ENCODE measurements at regions of chr19 and their contacts with region 1.

Region 1: DNA sequence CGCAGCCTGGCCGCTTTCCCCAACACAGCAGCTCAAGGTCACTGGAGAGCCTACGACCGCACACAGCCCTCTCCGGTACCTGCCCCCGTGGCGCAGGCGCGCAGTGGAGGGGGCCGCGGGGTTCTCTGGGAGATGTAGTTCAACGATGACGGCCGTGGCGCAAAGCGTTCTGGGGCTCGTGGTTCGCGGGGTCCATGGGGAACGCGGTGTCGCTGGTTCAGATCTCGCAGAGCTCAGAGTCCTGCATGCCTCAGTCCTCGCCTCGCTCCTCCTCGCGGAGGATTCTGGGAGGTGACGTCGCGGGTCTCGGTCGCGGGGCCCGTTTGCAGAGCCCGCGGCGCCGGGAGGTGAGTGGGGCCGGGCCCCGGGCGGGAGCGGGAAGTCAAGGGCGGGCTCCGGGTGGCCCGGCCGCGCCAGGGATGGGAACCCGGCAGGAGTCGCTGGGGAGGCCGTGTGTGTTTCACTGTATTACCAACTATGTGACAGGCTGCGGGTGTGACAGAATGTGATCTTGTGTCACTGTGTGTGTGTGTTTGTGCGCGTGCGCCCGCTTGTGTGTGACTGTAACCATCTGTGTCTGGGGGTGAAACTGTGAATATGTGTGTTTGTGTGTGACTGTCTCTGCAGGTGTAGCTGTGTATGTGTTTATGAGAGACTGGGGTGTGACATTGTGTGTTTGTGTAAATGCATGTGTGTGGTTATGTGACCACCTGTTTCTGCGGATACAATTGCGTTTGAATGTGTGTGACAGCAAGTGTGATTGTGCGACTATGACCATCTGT is at the start of gene ZNF527:
- H3K4me3 ChIP-seq: peak within 1 kb of the TSS; percentile 48
- H3K27ac ChIP-seq: peak within 1 kb of the TSS; percentile 52
- H3K4me1 ChIP-seq: no peaks in the 10 kb centered on the region
- CTCF ChIP-seq: peak; percentile 91

Region 2: GRCh38 chr19:37136111-37136510 is 235.0 kb before region 1 on chr19:
- CTCF ChIA-PET with region 1: no interaction called
- POLR2A ChIA-PET with region 1: no interaction called
- H3K4me3 ChIP-seq: no peak overlapping the region
- H3K27ac ChIP-seq: no peak overlapping the region
- H3K4me1 ChIP-seq: no peaks in the 10 kb centered on the region
- CTCF ChIP-seq: no peak

Region 3: DNA sequence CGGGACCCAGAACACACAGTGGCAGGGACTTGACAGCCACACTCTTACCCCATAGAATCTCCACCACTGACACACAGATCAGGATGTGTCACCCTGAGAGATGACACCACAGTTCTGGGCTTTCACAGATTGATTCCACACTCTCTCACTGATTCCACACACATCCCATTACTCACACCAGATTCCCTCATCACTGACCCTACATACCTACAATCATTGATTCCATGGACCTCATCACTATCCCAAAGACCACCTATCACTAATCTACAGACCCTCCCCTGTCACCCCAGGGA is 57.8 kb before region 1 on chr19:
- CTCF ChIA-PET with region 1: no interaction called
- POLR2A ChIA-PET with region 1: interaction called, 17 read pairs
- H3K4me3 ChIP-seq: no peak overlapping the region
- H3K27ac ChIP-seq: no peak overlapping the region
- H3K4me1 ChIP-seq: no peaks in the 10 kb centered on the region
- CTCF ChIP-seq: no peak

Region 4: GRCh38 chr19:37389234-37389633 is 18.2 kb after region 1 on chr19:
- CTCF ChIA-PET with region 1: no interaction called
- POLR2A ChIA-PET with region 1: interaction called, 11 read pairs
- H3K4me3 ChIP-seq: no peak overlapping the region
- H3K27ac ChIP-seq: no peak overlapping the region
- H3K4me1 ChIP-seq: no peaks in the 10 kb centered on the region
- CTCF ChIP-seq: no peak

Region 5: GRCh38 chr19:37506387-37507166 is 135.5 kb after region 1 on chr19 and contains the start of gene ZNF793:
- CTCF ChIA-PET with region 1: no interaction called
- POLR2A ChIA-PET with region 1: interaction called, 19 read pairs
- H3K4me3 ChIP-seq: peak within 1 kb of the TSS; percentile 53
- H3K27ac ChIP-seq: peak within 1 kb of the TSS; percentile 68
- H3K4me1 ChIP-seq: no peaks in the 10 kb centered on the region
- CTCF ChIP-seq: peak; percentile 41; the same call in 1 of the 2 replicates

Region 6: GRCh38 chr19:37655689-37656371 is 284.8 kb after region 1 on chr19:
- CTCF ChIA-PET with region 1: no interaction called
- POLR2A ChIA-PET with region 1: interaction called, 13 read pairs
- H3K4me3 ChIP-seq: peak overlapping the region; percentile 52
- H3K27ac ChIP-seq: peak overlapping the region; percentile 96
- H3K4me1 ChIP-seq: peaks cover 8% of the 10 kb centered on the region; the same call in 1 of the 2 replicates
- CTCF ChIP-seq: peak; percentile 88